ENCODE measurements at regions of chr12 and their contacts with region 1.

Region 1: DNA sequence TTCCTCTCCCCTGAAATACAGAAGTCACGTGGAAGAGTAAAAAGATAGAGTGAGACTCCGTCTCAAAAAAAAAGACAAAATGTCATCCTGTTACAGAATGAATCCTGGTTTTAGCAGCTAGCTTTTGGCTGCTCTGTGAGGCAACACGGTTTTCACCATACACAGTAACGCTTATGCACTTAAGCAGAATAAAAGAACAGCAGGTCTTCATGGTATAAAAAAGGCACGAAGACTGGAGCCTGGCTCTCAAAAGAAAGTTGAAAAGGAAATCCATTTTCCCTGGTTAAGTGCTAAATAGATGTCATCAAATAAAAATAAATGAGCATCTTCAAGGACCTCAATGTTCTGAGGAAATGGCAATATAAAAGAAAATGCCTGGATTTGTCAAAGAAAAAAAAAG is 444.1 kb downstream of the IPO8 start:
- DNase-seq: no peak
- H3K4me3 Mint-ChIP-seq: no peak overlapping the region
- H3K27ac Mint-ChIP-seq: no peak overlapping the region
- H3K4me1 Mint-ChIP-seq: no peaks in the 10 kb centered on the region
- H3K27me3 Mint-ChIP-seq: peaks cover 18% of the 10 kb centered on the region
- CTCF ChIP-seq: no peak

Region 2: GRCh38 chr12:30100741-30101140 is 150.8 kb before region 1 on chr12:
- CTCF ChIA-PET with region 1: no interaction called
- intact Hi-C with region 1: no loop called
- DNase-seq: no peak
- H3K4me3 Mint-ChIP-seq: no peak overlapping the region
- H3K27ac Mint-ChIP-seq: no peak overlapping the region
- H3K4me1 Mint-ChIP-seq: no peaks in the 10 kb centered on the region
- H3K27me3 Mint-ChIP-seq: no peaks in the 10 kb centered on the region
- CTCF ChIP-seq: no peak

Region 3: DNA sequence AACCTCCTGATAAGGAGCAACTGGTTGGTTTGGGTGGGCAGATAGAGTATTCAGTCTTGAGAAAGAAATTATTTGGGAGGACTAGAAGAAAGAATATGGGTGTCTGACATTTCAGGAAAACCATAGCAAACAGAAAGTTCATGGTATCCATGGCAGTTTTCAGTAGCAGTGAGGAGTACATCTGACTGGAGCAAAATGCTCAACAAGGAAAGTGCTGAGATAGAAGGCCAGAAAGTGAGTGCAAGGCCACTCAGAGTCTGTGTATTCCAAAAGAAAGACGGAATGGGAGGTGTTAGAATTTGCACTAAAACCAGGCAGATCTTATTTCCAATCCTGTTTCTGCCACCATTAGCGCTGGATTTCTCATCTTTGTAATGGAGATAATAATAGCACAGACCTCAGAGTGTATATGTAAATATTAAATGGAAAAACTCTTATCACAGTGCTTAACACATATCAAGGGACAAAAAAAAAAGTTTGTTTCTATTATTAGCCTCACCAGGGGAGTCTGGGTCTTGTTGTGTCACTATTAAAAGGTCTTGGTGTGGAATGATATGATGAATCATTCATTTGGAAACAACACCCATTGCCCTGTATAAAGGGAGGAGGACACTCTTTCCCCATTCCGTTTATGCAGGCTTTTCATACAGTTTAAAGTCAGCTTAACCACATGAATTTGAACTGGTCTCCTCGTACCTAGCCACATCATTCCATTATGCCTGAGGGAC is 94.4 kb after region 1 on chr12:
- CTCF ChIA-PET with region 1: no interaction called
- intact Hi-C with region 1: loop called (anchors 1 kb)
- DNase-seq: no peak
- H3K4me3 Mint-ChIP-seq: no peak overlapping the region
- H3K27ac Mint-ChIP-seq: no peak overlapping the region
- H3K4me1 Mint-ChIP-seq: no peaks in the 10 kb centered on the region
- H3K27me3 Mint-ChIP-seq: peaks cover 20% of the 10 kb centered on the region
- CTCF ChIP-seq: no peak

Measured in Calu3 (cell line).